Activated CD4-positive, alpha-beta T cell treated with anti-CD3 and anti-CD28 coated beads for 36 hours (primary cell): ENCODE measurements at regions of chr22 and their contacts with region 1.

Region 1: DNA sequence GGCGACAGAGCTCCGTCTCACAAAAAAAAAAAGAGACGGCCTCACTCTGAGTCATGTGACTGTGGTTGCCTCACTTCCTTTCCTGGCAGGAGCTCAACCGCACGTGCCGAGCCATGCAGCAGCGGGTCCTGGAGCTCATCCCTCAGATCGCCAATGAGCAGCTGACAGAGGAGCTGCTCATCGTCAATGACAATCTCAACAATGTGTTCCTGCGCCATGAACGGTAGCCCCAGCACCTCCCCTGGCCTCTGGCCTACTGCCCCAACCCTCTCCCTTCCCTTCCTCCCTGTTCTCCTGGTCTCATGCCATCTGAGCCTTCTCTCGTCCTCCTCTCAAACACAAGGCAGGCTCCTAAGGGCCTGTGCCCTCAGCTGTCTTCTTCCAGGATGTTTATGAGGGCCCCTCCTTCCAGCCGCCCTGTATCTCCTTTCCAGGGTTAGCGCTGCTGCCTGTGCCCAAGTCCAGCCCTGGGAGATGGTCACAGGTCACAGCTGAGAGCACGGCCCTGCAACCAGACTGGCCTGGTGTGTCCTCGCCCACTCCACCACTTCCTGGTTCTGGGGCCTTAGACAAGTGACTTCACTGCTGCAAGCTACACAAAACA is 30.7 kb downstream of the TOM1 start:
- DNase-seq: peak; percentile 83
- ATAC-seq: peak; percentile 70
- H3K4me3 Mint-ChIP-seq: peak overlapping the region; percentile 78
- H3K27ac Mint-ChIP-seq: peak overlapping the region; percentile 97
- H3K4me1 Mint-ChIP-seq: peaks cover 30% of the 10 kb centered on the region
- H3K27me3 Mint-ChIP-seq: no peaks in the 10 kb centered on the region

Region 2: DNA sequence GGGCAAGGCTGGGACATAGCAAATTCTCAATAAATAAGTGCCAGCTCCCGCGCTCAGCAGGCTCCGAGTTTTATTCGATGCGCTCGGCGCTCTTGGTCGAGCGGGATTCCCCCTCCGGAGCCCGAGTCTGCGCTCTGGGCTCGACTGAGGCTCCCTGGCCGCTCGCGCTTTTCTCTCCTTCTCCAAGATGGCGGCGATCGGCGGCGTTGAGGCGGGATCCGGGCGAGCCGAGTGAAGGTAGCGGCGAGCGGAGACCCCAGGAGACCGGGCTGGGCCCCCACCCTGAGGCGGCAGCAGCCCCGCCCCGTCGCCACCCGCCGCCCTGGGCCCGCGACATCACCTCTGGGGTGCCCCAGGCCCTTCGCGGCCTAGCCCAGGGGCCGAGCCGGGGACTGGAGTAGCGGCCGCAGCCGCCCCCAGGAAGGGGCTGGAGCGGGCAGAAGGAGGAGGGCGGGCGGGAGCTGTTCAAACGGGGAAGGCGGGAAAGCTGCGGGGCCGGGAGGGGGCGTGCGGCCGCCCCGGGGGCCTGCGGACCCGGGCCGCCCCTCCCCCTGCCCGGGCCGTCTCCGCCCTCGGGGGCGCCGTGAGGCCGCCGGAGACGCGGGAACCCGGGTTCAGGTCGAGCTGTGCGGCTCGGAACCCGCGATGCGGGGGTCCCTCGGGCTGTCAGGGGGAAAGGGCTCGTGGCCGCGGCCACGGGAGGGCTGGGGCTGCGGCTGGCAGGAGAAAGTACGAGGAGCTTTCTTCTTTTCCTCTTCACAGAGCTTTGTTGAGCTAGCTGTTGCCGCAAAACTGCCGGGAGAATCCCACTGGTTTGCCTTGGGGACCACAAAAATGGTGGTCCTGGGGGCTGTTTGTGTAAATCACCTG is 72.8 kb before region 1 on chr22 and contains the start of gene HMGXB4:
- CTCF ChIA-PET with region 1: no interaction called
- POLR2A ChIA-PET with region 1: interaction called, 3 read pairs
- intact Hi-C with region 1: loop called (anchors 1 to 10 kb)
- DNase-seq: peak; percentile 93
- ATAC-seq: peak; percentile 92
- H3K4me3 Mint-ChIP-seq: peak within 1 kb of the TSS; percentile 91
- H3K27ac Mint-ChIP-seq: peak within 1 kb of the TSS; percentile 90
- H3K4me1 Mint-ChIP-seq: peaks cover 26% of the 10 kb centered on the region
- H3K27me3 Mint-ChIP-seq: no peaks in the 10 kb centered on the region
- total RNA-seq, gene HMGXB4: 36.8 to 37.6 TPM

Region 3: GRCh38 chr22:35313311-35314121 is 16.8 kb before region 1 on chr22:
- CTCF ChIA-PET with region 1: interaction called, 4 read pairs
- POLR2A ChIA-PET with region 1: no interaction called
- intact Hi-C with region 1: loop called in 1 of 2 experiments (anchors 1 kb)
- DNase-seq: peak; percentile 65
- ATAC-seq: peak; percentile 86
- H3K4me3 Mint-ChIP-seq: no peak overlapping the region
- H3K27ac Mint-ChIP-seq: peak overlapping the region; percentile 74
- H3K4me1 Mint-ChIP-seq: peaks cover 66% of the 10 kb centered on the region
- H3K27me3 Mint-ChIP-seq: no peaks in the 10 kb centered on the region

Region 4: DNA sequence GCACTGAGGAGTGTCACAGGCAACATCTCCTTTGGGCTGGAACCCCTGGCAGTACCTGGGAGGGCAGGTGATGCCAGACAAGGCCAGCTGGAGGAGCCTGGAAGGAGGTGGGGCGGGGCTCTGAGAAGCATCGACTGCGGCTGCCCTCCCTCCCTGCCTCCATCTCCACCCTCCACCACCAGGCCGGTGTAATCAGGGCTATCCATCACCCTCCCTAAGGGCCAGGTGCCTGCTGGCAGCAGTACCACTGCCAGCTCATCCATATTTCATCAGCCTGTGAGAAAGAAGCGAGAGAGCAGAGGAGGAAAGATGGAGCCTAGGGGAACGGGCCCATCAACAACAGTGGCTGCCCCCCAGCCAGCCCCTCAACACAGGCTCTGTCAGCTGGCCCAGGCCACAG is 158.9 kb after region 1 on chr22:
- CTCF ChIA-PET with region 1: no interaction called
- POLR2A ChIA-PET with region 1: no interaction called
- intact Hi-C with region 1: no loop called
- DNase-seq: no peak
- ATAC-seq: no peak
- H3K4me3 Mint-ChIP-seq: no peak overlapping the region
- H3K27ac Mint-ChIP-seq: no peak overlapping the region
- H3K4me1 Mint-ChIP-seq: no peaks in the 10 kb centered on the region
- H3K27me3 Mint-ChIP-seq: peaks cover 17% of the 10 kb centered on the region